ENCODE measurements at regions of chr6 and their contacts with region 1.

Region 1: GRCh38 chr6:134161036-134161435 is 108.6 kb upstream of the SLC2A12 start:
- DNase-seq: no peak
- ATAC-seq: no peak
- H3K4me3 ChIP-seq: no peak overlapping the region
- H3K27ac ChIP-seq: peak overlapping the region; percentile 21 to 37; a peak in 1 of 6 replicates
- H3K4me1 ChIP-seq: peaks cover 5% of the 10 kb centered on the region; the same call in 1 of the 3 replicates
- CTCF ChIP-seq: no peak
- EP300 ChIP-seq: no peak
- POLR2A ChIP-seq: no peak
- RAD21 ChIP-seq: no peak

Region 2: DNA sequence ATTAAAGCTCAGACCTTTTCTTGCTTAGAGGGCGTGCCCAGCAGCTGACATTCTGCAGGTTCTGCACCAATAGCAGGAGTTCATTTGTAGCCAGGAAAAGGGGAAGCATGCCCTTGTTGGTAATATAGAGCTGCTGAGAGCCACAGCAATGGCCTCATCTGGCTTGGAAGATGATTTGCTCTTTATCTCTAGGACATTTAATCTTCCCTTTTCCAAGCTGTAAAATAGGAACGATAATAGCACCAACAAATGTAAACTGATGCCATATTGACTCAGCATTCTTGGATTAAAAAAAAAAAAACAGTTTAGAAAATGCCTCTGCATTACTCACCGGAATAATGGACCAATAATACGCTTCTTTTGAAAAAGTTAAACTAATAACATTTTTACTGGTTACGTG is 15.2 kb before region 1 on chr6:
- CTCF ChIA-PET with region 1: interaction called, 15 read pairs
- POLR2A ChIA-PET with region 1: no interaction called
- DNase-seq: no peak
- ATAC-seq: no peak
- H3K4me3 ChIP-seq: no peak overlapping the region
- H3K27ac ChIP-seq: no peak overlapping the region
- H3K4me1 ChIP-seq: no peaks in the 10 kb centered on the region
- CTCF ChIP-seq: no peak
- EP300 ChIP-seq: no peak
- POLR2A ChIP-seq: no peak
- RAD21 ChIP-seq: no peak

Region 3: DNA sequence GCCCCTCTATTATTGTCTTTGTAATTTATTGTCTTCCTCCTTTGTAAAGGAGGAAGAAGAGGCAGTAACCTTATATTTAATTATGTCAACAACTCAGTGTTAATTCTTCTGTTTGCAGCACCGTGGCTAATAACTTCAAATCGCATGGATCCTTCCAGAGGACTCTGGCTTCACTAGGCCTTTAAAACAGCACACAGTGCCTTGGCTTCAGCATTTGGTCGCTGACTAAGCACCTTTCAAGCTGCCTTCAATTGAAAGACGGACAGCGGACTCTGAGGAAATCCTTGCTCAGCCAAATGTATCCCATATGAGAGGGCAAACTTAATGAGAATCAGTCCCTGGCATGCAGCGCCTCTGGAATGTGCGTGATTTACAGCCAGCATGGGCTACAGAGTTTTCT is 92.6 kb after region 1 on chr6:
- CTCF ChIA-PET with region 1: no interaction called
- POLR2A ChIA-PET with region 1: no interaction called
- DNase-seq: no peak
- ATAC-seq: no peak
- H3K4me3 ChIP-seq: no peak overlapping the region
- H3K27ac ChIP-seq: no peak overlapping the region
- H3K4me1 ChIP-seq: peaks cover 19% of the 10 kb centered on the region
- CTCF ChIP-seq: no peak
- EP300 ChIP-seq: no peak
- POLR2A ChIP-seq: no peak
- RAD21 ChIP-seq: no peak

Region 4: DNA sequence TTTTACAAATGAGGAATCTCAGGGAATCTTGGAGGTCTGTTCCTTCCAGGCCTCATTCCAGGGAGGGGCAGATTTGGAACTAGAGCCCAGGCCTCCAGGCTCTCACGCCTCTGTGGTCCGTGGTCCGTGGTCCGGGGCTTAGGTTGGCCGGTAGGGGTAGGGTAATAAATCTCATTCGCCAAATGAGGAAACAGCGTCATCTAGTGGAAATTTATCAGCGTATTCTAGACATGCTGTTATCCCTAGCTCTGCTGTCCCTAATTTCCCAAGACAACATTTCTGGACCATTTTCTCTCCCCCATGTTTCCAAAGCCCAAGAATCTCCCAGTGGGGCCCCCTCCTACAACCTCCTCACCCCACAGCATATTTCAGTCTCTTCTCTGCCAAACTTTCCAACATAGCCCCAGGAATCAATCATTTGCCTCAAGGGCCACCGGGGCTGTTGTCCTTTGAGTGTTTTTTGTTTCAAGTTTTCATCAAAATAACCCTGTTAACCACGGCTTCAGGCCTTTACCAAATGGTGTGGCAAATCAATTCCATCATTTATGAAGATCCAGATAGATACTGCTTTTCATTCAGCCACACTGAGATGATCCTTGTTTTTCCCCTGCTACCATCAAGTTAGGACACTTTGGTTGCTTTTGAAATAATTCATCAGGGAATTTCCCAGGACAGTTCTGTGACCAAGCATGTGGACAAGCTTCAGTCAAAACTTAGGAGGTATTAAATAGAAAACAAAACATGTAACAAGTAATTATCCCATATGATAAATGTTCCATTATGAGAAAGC is 662.1 kb after region 1 on chr6:
- CTCF ChIA-PET with region 1: interaction called, 35 read pairs
- POLR2A ChIA-PET with region 1: no interaction called
- DNase-seq: peak; percentile 66 to 82
- ATAC-seq: peak; percentile 100
- H3K4me3 ChIP-seq: no peak overlapping the region
- H3K27ac ChIP-seq: peak overlapping the region; percentile 61 to 86
- H3K4me1 ChIP-seq: peaks cover 6% of the 10 kb centered on the region; the same call in 2 of the 3 replicates
- CTCF ChIP-seq: peak; percentile 89
- EP300 ChIP-seq: no peak
- POLR2A ChIP-seq: no peak
- RAD21 ChIP-seq: peak; percentile 97

Measured in A549 (cell line).